B cell (primary cell): ENCODE measurements at regions of chr10 and their contacts with region 1.

Region 1: GRCh38 chr10:104337974-104338735 is at the start of gene ITPRIP:
- DNase-seq: peak; percentile 87
- ATAC-seq: peak; percentile 75
- H3K4me3 ChIP-seq: peak within 1 kb of the TSS; percentile 94 to 98 (median 97)
- H3K4me3 Mint-ChIP-seq: peak within 1 kb of the TSS; percentile 100
- H3K27ac ChIP-seq: peak within 1 kb of the TSS; percentile 80 to 83
- H3K27ac Mint-ChIP-seq: peak within 1 kb of the TSS; percentile 100
- H3K4me1 ChIP-seq: peaks cover 34 to 54% of the 10 kb centered on the region in 2 donors
- H3K4me1 Mint-ChIP-seq: peaks cover 53% of the 10 kb centered on the region
- H3K27me3 ChIP-seq: no peaks in the 10 kb centered on the region
- H3K27me3 Mint-ChIP-seq: no peaks in the 10 kb centered on the region
- CTCF ChIP-seq: no peak
- total RNA-seq, gene ITPRIP: 21.3 and 22.5 TPM in 2 replicates

Region 2: DNA sequence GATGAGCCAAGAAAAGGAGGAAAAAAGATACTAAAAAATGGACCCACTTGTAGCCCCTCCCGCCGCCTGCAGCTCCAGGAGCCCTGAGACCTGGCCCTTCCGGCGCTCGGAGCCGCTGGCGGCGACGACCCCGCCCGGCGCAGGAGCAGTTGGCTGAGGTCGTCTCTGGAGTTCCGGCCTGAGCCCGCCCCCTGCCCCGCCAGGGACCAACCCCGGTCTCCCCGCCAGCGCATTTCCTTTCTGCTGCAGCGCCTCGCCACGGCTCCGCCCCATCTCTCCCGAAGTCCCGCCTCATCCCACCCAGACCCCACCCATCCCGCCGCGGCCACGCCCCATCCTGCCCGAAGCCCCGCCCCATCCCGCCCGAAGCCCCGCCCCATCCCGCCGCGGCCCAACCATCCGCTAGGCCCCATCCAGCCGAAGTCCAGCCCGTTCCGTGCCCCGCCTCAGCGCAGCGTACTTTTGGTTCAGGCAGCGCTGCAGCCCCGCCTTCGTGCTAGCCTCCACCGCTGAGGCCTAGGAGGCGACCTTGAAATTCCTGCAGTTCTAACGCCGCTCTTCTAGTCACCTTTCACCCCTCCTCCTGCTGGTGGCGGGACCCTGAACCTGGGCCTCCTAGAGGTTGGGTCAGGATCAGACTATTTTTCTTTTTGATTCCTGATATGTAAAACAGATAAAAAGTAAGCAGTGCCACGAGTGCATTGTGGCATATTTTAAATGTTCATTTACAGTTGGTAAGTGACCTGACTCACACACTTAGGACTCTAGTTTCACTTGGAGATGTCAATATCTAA is 419.9 kb before region 1 on chr10 and contains the start of gene STN1:
- CTCF ChIA-PET with region 1: no interaction called
- POLR2A ChIA-PET with region 1: interaction called, 4 read pairs
- intact Hi-C with region 1: loop called (anchors 5 kb)
- DNase-seq: peak; percentile 96
- ATAC-seq: peak; percentile 93
- H3K4me3 ChIP-seq: peak within 1 kb of the TSS; percentile 67 to 95 (median 94)
- H3K4me3 Mint-ChIP-seq: peak within 1 kb of the TSS; percentile 99
- H3K27ac ChIP-seq: peak within 1 kb of the TSS; percentile 78 to 85
- H3K27ac Mint-ChIP-seq: peak within 1 kb of the TSS; percentile 96
- H3K4me1 ChIP-seq: peaks cover 27 to 38% of the 10 kb centered on the region in 2 donors
- H3K4me1 Mint-ChIP-seq: peaks cover 33% of the 10 kb centered on the region
- H3K27me3 ChIP-seq: no peaks in the 10 kb centered on the region
- H3K27me3 Mint-ChIP-seq: no peaks in the 10 kb centered on the region
- CTCF ChIP-seq: no peak
- total RNA-seq, gene STN1: 16.3 and 16.8 TPM in 2 replicates

Region 3: DNA sequence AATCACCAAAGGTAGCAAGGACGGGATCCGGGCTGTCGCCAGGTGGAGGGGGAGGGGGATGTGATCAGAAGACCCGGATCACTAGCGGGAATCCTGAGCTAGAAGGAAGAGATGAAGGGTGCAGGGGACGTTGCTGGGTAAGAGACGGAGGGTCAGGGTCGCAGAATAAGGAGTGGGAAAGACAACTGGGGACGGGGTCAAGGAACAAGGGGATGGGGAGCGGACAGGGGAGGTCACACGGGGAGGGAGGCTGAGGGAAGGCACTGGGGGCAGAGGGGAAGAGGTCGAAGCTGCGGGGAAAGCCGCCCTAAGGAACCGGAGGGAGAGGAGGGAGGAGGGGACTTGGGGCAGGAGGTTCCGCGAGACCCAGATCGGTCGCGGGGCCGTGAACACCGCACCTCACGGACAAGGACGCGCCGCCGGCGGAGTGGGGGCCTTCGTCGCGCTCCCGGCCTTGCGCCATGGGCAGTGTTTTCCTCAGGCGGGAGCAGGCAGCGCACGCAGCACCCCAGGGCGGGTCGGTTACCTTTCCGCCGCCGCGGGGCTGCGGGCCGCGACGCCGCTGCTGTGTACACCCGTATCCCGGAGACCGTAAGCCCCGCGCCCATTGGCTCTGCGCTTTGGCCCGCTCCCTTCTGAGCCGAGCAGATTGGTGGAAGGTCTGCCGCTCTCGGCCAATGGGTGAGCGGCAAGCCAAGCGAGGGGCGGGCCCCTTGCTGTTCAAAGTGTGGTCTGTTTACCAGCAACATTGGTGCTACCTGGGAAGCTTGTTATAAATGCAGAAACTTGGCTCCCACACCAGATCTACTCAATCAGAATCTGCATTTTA is 106.2 kb before region 1 on chr10 and contains the start of gene CFAP43:
- CTCF ChIA-PET with region 1: no interaction called
- POLR2A ChIA-PET with region 1: no interaction called
- intact Hi-C with region 1: loop called (anchors 2 kb)
- DNase-seq: peak; percentile 97
- ATAC-seq: peak; percentile 99
- H3K4me3 ChIP-seq: peak within 1 kb of the TSS; percentile 52 to 86 (median 67)
- H3K4me3 Mint-ChIP-seq: peak within 1 kb of the TSS; percentile 89
- H3K27ac ChIP-seq: peak within 1 kb of the TSS in 1 of 2 donors; percentile 66
- H3K27ac Mint-ChIP-seq: peak within 1 kb of the TSS; percentile 84
- H3K4me1 ChIP-seq: peaks cover 6 to 13% of the 10 kb centered on the region in 2 donors
- H3K4me1 Mint-ChIP-seq: peaks cover 10% of the 10 kb centered on the region
- H3K27me3 ChIP-seq: peaks cover 0 to 19% (median 13%) of the 10 kb centered on the region in 4 experiments
- H3K27me3 Mint-ChIP-seq: peaks cover 26% of the 10 kb centered on the region
- CTCF ChIP-seq: no peak
- total RNA-seq, gene CFAP43: 0.12 TPM in 1 of 2 replicates, not detected in the other

Region 4: DNA sequence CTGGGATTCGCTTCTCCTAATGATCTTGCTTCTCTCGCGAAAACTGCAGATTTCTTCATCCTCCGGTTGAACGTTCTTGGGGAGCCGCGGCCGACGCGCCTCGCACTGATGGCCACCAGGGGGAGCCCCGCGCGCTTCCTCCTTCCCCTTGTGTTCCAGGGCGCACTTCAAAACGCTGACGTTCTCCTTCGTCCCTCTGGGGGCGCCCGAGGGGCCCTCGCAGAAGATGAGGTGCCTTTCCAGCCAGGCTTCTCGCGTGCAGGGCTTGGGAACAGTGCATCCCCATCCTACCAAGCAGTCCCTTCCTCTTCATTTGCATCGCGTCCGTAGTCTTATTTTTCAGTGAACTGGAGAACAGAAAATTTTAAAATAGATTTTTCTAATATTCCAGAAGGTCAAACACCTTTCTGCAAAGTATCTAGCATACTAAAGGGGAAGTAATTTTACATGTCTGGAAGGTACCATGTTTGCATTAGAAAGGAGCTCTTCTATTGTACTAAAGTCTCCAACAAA is 46.7 kb before region 1 on chr10:
- CTCF ChIA-PET with region 1: interaction called, 26 read pairs
- POLR2A ChIA-PET with region 1: interaction called, 3 read pairs
- intact Hi-C with region 1: loop called (anchors 1 kb)
- DNase-seq: peak; percentile 91
- ATAC-seq: peak; percentile 100
- H3K4me3 ChIP-seq: no peak overlapping the region
- H3K4me3 Mint-ChIP-seq: peak overlapping the region; percentile 44
- H3K27ac ChIP-seq: no peak overlapping the region
- H3K27ac Mint-ChIP-seq: peak overlapping the region; percentile 28
- H3K4me1 ChIP-seq: peaks cover 4 to 8% of the 10 kb centered on the region in 2 donors
- H3K4me1 Mint-ChIP-seq: peaks cover 5% of the 10 kb centered on the region
- H3K27me3 ChIP-seq: peaks cover 0 to 16% (median 6%) of the 10 kb centered on the region in 4 experiments
- H3K27me3 Mint-ChIP-seq: peaks cover 34% of the 10 kb centered on the region
- CTCF ChIP-seq: peak; percentile 100

Region 5: DNA sequence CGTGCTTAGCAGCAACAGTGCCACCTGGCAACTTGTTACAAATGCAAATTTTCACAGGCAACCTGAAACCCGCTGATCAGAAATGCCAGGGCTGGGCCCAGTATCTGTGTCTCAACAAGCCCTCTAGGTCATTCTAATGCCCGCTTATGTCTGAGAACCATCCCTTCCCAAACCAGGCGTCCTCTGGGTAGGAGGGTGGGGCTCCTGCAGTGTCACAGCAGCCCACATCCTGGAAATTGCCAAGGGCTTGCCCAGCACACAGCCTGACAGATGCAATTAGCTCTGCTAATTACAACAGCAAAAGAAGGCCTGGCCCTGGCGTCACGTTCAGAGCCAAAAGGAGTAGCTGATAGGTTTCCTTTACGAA is 15.8 kb before region 1 on chr10:
- CTCF ChIA-PET with region 1: interaction called, 594 read pairs
- POLR2A ChIA-PET with region 1: interaction called, 6 read pairs
- intact Hi-C with region 1: loop called (anchors 1 kb)
- DNase-seq: peak; percentile 41
- ATAC-seq: peak; percentile 48
- H3K4me3 ChIP-seq: peak overlapping the region in 1 of 5 experiments; percentile 30
- H3K4me3 Mint-ChIP-seq: peak overlapping the region; percentile 58
- H3K27ac ChIP-seq: peak overlapping the region; percentile 46 to 67
- H3K27ac Mint-ChIP-seq: peak overlapping the region; percentile 80
- H3K4me1 ChIP-seq: peaks cover 94 to 98% of the 10 kb centered on the region in 2 donors
- H3K4me1 Mint-ChIP-seq: peaks cover 93% of the 10 kb centered on the region
- H3K27me3 ChIP-seq: no peaks in the 10 kb centered on the region
- H3K27me3 Mint-ChIP-seq: no peaks in the 10 kb centered on the region
- CTCF ChIP-seq: no peak